ENCODE measurements at regions of chr19 and their contacts with region 1.

Region 1: DNA sequence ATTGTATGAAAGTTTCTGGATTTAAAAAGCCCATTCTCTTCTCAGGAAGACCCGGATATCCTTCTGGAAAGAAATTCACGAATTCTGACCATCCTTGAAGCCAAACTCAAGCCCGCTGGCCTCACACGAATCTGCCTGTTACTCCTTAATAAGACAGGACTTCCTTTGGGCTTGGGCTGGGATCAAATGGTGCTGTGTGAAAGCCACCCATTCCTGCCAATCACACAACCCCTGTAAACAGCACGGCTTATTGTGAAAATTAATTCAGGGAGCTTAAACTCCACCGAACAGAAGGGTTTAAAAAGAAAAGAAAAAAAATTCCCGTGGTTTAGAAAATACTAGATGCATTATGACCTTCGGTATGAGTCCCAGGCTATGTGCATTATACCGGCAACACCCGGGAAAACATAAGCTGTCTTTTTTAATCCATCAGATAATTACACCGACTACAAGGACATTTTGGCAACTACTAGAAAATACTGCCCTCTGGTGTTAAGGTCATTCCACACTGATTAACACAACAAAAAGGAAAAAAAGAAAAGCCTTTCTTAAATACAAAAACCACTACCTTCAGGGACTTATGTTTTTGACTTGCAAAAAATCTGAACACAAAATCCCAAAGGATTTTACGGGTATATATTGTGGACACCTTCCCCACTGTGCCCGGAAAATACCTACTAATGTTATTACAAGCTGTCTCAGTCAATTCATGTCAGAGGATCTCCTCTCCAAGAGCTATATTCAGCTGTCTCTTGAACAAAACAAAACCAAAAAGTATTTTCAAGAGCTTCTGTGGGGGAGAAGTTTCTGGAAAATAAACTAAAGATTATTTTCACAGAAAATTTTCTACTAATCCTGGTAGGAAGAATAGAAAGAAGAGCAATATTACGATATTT is 76.0 kb upstream of the LSM14A start:
- DNase-seq: peak; percentile 51
- ATAC-seq: peak; percentile 92
- H3K4me3 ChIP-seq: no peak overlapping the region
- H3K27ac ChIP-seq: no peak overlapping the region
- H3K4me1 ChIP-seq: peaks cover 6% of the 10 kb centered on the region; the same call in 1 of the 2 replicates
- H3K27me3 ChIP-seq: no peaks in the 10 kb centered on the region
- CTCF ChIP-seq: peak; percentile 77; the same call in 1 of the 2 replicates

Region 2: DNA sequence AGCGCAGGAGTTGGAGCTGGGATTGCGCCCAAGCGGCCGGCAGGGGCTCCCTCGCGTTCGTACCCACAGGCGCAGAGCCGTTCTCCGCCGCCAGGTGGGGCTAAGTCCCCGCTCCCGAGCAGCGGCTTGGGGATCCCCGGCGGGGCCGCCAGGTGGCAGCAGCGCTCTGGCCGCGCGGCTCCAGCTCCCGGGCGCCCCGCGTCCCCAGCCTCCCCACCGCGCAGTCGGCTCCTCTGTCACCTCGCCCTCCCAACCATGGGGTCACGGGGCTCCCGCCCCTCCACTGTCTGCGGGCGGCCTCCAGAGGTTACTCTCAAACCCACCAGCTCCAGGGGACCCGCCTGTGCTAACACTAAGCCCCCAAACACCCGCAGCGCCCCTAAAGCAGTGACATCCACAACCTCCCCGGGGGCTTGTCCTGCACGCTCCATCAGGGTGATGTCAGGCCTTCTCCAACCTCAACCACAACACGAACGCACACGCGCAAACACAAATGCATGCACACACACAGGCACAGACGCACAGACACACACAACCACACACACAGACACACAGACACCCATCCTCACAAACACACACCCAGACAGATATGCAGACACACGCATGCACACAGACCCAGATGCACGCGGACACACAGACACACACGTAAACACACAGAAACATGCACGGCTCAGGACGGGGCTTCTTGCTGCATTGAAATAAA is 318.0 kb before region 1 on chr19:
- CTCF ChIA-PET with region 1: interaction called, 75 read pairs
- POLR2A ChIA-PET with region 1: no interaction called
- in situ Hi-C with region 1: no loop called
- intact Hi-C with region 1: loop called (anchors 2 kb)
- DNase-seq: peak; percentile 67
- ATAC-seq: peak; percentile 91
- H3K4me3 ChIP-seq: peak overlapping the region; percentile 21 to 41; a peak in 3 of 4 replicates
- H3K27ac ChIP-seq: no peak overlapping the region
- H3K4me1 ChIP-seq: peaks cover 4% of the 10 kb centered on the region
- H3K27me3 ChIP-seq: peaks cover 7% of the 10 kb centered on the region; the same call in 1 of the 2 replicates
- CTCF ChIP-seq: peak; percentile 100

Region 3: DNA sequence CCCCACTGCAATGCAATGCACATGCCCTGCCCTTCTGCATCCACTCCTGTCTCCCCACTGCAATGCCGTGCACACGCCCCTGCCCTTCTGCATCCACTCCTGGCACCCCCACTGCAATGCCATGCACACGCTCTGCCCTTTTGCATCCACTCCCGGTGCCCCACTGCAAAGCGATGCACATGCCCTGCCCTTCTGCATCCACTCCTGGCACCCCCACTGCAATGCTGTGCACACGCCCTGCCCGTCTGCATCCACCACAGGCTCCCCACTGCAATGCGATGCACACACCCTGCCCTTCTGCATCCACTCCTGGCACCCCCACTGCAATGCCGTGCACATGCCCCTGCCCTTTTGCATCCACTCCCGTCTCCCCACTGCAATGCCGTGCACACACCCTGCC is 201.5 kb before region 1 on chr19:
- CTCF ChIA-PET with region 1: no interaction called
- POLR2A ChIA-PET with region 1: no interaction called
- in situ Hi-C with region 1: no loop called
- intact Hi-C with region 1: no loop called
- DNase-seq: no peak
- ATAC-seq: no peak
- H3K4me3 ChIP-seq: no peak overlapping the region
- H3K27ac ChIP-seq: no peak overlapping the region
- H3K4me1 ChIP-seq: no peaks in the 10 kb centered on the region
- H3K27me3 ChIP-seq: peaks cover 4% of the 10 kb centered on the region; the same call in 1 of the 2 replicates
- CTCF ChIP-seq: no peak

Region 4: DNA sequence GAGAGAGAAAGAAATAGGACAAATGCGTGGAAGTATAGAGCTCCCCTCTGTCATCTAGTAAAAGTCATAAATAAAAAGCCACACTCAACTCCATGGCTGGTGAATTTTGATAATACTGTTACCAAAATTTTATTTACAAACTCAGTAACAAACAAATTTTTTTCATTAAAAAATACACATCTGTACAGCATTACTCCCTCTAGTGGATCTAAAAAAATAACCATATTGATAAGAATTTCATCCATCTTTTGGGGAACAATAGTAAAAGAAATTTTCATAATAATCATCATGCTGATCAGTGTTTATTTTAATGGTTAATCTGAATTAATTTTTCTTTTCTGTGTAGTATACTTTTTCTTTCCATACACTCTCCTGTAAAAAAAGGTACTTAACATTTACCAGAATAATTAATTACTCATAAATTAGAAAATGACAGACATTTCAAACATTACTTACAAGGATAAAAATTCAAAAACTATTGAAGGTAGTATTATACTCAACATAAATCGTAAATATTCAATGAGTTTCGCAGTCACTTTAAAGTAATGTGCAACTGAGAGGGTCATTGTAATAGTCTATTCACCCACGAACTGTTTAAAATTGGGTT is 97.4 kb before region 1 on chr19:
- CTCF ChIA-PET with region 1: interaction called, 7 read pairs
- POLR2A ChIA-PET with region 1: no interaction called
- in situ Hi-C with region 1: no loop called
- intact Hi-C with region 1: loop called (anchors 5 kb)
- DNase-seq: no peak
- ATAC-seq: peak; percentile 34; the same call in 1 of the 2 replicates
- H3K4me3 ChIP-seq: no peak overlapping the region
- H3K27ac ChIP-seq: no peak overlapping the region
- H3K4me1 ChIP-seq: peaks cover 6% of the 10 kb centered on the region
- H3K27me3 ChIP-seq: peaks cover 14% of the 10 kb centered on the region
- CTCF ChIP-seq: peak; percentile 52; the same call in 1 of the 2 replicates

Region 5: GRCh38 chr19:34035626-34036025 is 60.6 kb before region 1 on chr19:
- CTCF ChIA-PET with region 1: interaction called, 3 read pairs
- POLR2A ChIA-PET with region 1: no interaction called
- in situ Hi-C with region 1: no loop called
- intact Hi-C with region 1: loop called (anchors 5 kb)
- DNase-seq: no peak
- ATAC-seq: no peak
- H3K4me3 ChIP-seq: no peak overlapping the region
- H3K27ac ChIP-seq: no peak overlapping the region
- H3K4me1 ChIP-seq: no peaks in the 10 kb centered on the region
- H3K27me3 ChIP-seq: no peaks in the 10 kb centered on the region
- CTCF ChIP-seq: no peak

Region 6: DNA sequence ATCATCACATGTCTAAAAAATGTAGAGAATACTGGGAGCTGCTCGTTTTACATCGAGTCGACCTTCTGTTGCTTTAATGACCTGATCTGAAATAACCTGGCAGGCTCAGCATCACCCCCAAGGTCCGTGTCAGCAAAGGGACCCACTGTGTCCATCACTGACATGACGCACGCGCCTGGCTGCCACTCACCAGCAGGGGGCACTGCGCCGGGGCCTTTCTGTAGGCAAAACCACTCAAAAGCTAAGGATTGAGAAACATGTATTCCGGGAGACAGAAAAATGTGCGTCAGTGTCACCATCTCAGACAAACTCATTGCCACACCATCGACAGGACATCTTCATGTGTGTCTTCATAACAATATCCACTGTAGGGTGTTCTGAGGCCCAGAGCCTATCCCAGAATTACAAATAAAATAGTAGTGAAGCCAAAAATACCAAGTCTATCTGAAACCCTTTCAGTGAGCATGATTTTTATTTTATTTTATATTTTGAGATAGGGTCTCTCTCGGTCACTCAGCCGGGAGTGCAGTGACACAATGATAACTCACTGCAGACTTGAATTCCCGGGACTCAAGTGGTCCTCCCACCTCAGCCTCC is 54.2 kb before region 1 on chr19:
- CTCF ChIA-PET with region 1: interaction called, 21 read pairs
- POLR2A ChIA-PET with region 1: no interaction called
- in situ Hi-C with region 1: no loop called
- intact Hi-C with region 1: loop called (anchors 5 kb)
- DNase-seq: peak; percentile 24
- ATAC-seq: peak; percentile 92
- H3K4me3 ChIP-seq: no peak overlapping the region
- H3K27ac ChIP-seq: no peak overlapping the region
- H3K4me1 ChIP-seq: no peaks in the 10 kb centered on the region
- H3K27me3 ChIP-seq: no peaks in the 10 kb centered on the region
- CTCF ChIP-seq: peak; percentile 98

Region 7: GRCh38 chr19:34082289-34083077 is 13.8 kb before region 1 on chr19:
- CTCF ChIA-PET with region 1: interaction called, 10 read pairs
- POLR2A ChIA-PET with region 1: interaction called, 5 read pairs
- in situ Hi-C with region 1: no loop called
- intact Hi-C with region 1: no loop called
- DNase-seq: no peak
- ATAC-seq: no peak
- H3K4me3 ChIP-seq: no peak overlapping the region
- H3K27ac ChIP-seq: no peak overlapping the region
- H3K4me1 ChIP-seq: no peaks in the 10 kb centered on the region
- H3K27me3 ChIP-seq: no peaks in the 10 kb centered on the region
- CTCF ChIP-seq: no peak

Region 8: GRCh38 chr19:34134190-34135053 is 38.2 kb after region 1 on chr19:
- CTCF ChIA-PET with region 1: interaction called, 10 read pairs
- POLR2A ChIA-PET with region 1: no interaction called
- in situ Hi-C with region 1: no loop called
- intact Hi-C with region 1: no loop called
- DNase-seq: peak; percentile 47
- ATAC-seq: peak; percentile 98
- H3K4me3 ChIP-seq: peak overlapping the region; percentile 70 to 90
- H3K27ac ChIP-seq: peak overlapping the region; percentile 81
- H3K4me1 ChIP-seq: no peaks in the 10 kb centered on the region
- H3K27me3 ChIP-seq: no peaks in the 10 kb centered on the region
- CTCF ChIP-seq: no peak

Measured in Panc1 (cell line).